ENCODE measurements at regions of chr5 and their contacts with region 1.

Region 1: DNA sequence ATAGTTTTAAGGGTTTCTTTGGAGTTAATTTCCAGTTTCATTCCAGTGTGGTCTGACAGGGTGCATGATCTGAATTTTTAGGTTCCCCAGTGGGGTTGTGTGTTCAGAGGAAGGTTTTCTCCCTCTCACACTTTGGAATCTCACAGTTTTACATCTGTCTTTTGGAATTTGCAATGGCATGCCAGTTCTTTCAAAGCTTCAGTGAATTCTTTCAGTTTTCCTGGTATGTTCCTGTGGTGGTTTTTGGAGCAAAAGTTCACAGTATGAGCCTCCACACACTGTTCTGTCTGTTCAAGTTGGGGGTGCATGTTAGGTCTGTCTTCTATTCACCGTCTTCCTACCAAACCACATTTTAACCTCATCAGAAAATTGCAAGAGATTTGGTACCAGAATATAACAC is 624.2 kb downstream of the KCTD16 start:
- DNase-seq: no peak
- ATAC-seq: no peak
- H3K4me3 ChIP-seq: no peak overlapping the region
- H3K27ac ChIP-seq: no peak overlapping the region
- H3K4me1 ChIP-seq: no peaks in the 10 kb centered on the region
- H3K27me3 ChIP-seq: no peaks in the 10 kb centered on the region
- CTCF ChIP-seq: no peak

Region 2: DNA sequence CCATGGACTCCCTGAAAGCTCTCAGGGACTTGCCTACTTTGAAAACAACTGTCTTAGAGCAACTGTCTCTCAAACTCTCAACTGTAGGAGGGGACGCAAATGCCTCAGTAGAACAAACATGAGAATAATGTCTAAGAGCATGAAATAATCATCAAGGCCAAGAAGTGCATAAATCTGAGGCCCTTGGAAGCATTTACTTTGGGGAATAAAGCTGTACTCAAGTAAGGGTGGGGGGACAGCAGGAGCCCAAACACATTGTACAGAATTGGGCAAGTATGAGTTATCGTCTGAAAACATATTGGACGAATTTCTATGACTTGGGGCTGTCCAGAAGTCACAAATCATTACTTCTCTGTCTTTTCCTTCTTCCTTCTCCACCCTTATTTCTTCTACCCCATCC is 1079.3 kb before region 1 on chr5:
- CTCF ChIA-PET with region 1: no interaction called
- POLR2A ChIA-PET with region 1: interaction called, 15 read pairs
- in situ Hi-C with region 1: no loop called
- intact Hi-C with region 1: no loop called
- DNase-seq: no peak
- ATAC-seq: no peak
- H3K4me3 ChIP-seq: no peak overlapping the region
- H3K27ac ChIP-seq: no peak overlapping the region
- H3K4me1 ChIP-seq: no peaks in the 10 kb centered on the region
- H3K27me3 ChIP-seq: no peaks in the 10 kb centered on the region
- CTCF ChIP-seq: no peak

Region 3: GRCh38 chr5:144778561-144778960 is 16.4 kb before region 1 on chr5:
- CTCF ChIA-PET with region 1: no interaction called
- POLR2A ChIA-PET with region 1: no interaction called
- in situ Hi-C with region 1: no loop called
- intact Hi-C with region 1: no loop called
- DNase-seq: no peak
- ATAC-seq: no peak
- H3K4me3 ChIP-seq: no peak overlapping the region
- H3K27ac ChIP-seq: no peak overlapping the region
- H3K4me1 ChIP-seq: no peaks in the 10 kb centered on the region
- H3K27me3 ChIP-seq: no peaks in the 10 kb centered on the region
- CTCF ChIP-seq: no peak

Measured in Panc1 (cell line).